ENCODE measurements at regions of chr7 and their contacts with region 1.

Region 1: GRCh38 chr7:29639881-29640595 is 76.4 kb downstream of the PRR15 start:
- DNase-seq: no peak
- H3K4me3 ChIP-seq: no peak overlapping the region
- H3K27ac ChIP-seq: no peak overlapping the region
- H3K4me1 ChIP-seq: no peaks in the 10 kb centered on the region
- H3K27me3 ChIP-seq: no peaks in the 10 kb centered on the region
- CTCF ChIP-seq: no peak
- EP300 ChIP-seq: no peak
- POLR2A ChIP-seq: no peak

Region 2: GRCh38 chr7:30062591-30062990 is 422.6 kb after region 1 on chr7:
- intact Hi-C with region 1: loop called in 1 of 4 experiments (anchors 5 kb)
- DNase-seq: no peak
- H3K4me3 ChIP-seq: no peak overlapping the region
- H3K27ac ChIP-seq: no peak overlapping the region
- H3K4me1 ChIP-seq: no peaks in the 10 kb centered on the region
- H3K27me3 ChIP-seq: no peaks in the 10 kb centered on the region
- CTCF ChIP-seq: peak in 2 of 3 donors; percentile 40 to 48
- EP300 ChIP-seq: no peak
- POLR2A ChIP-seq: no peak

Region 3: GRCh38 chr7:31595390-31595789 is 1955.4 kb after region 1 on chr7:
- intact Hi-C with region 1: no loop called
- DNase-seq: no peak
- H3K4me3 ChIP-seq: no peak overlapping the region
- H3K27ac ChIP-seq: no peak overlapping the region
- H3K4me1 ChIP-seq: no peaks in the 10 kb centered on the region
- H3K27me3 ChIP-seq: no peaks in the 10 kb centered on the region
- CTCF ChIP-seq: no peak
- EP300 ChIP-seq: no peak
- POLR2A ChIP-seq: no peak

Measured in ovary (tissue), 10 donors.